ENCODE measurements at regions of chr10 and their contacts with region 1.

Region 1: GRCh38 chr10:114876602-114877300 is 55.2 kb downstream of the FHIP2A start:
- DNase-seq: peak; percentile 77
- H3K4me3 Mint-ChIP-seq: peak overlapping the region; percentile 17
- H3K27ac Mint-ChIP-seq: no peak overlapping the region
- H3K4me1 Mint-ChIP-seq: peaks cover 23% of the 10 kb centered on the region
- H3K27me3 Mint-ChIP-seq: no peaks in the 10 kb centered on the region
- CTCF ChIP-seq: peak; percentile 47

Region 2: DNA sequence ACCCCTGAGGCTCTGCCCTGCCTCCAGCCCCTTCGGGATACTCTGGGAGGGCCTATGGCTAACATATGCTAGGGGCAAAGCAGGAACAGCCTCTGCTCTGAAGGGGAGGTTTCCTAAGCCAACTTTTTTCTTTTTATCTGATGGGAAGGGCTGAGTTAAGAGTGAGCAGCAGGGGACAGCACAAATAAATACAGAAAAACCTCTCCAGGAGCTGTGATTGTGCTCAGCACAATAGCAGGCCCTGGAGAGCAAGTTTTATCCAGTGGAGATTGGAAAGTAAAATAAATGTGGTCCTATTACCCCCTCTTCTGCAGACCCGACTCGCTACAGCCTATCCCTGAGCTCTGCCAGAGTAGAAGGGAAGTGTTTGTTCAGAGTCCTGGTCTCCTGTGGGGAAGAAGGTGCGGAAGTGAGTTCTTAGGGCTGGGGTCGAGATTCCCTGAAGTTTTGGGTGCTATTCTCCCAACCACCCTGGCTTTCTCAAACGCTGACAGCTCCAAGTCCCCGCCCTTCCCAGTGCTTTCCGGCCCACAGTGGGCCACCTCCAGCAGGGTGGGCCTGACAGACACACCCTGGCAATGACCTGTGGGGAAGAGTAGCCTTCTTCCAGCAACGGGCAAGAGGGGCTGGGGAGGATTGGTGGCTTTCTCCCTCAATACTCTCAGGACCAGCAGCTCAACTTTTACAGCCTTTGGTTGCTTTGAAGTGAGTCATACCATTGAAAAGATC is 449.5 kb before region 1 on chr10:
- CTCF ChIA-PET with region 1: no interaction called
- intact Hi-C with region 1: no loop called
- DNase-seq: no peak
- H3K4me3 Mint-ChIP-seq: no peak overlapping the region
- H3K27ac Mint-ChIP-seq: no peak overlapping the region
- H3K4me1 Mint-ChIP-seq: no peaks in the 10 kb centered on the region
- H3K27me3 Mint-ChIP-seq: no peaks in the 10 kb centered on the region
- CTCF ChIP-seq: no peak

Region 3: GRCh38 chr10:114917927-114918672 is 41.3 kb after region 1 on chr10:
- CTCF ChIA-PET with region 1: no interaction called
- intact Hi-C with region 1: loop called (anchors 2 kb)
- DNase-seq: peak; percentile 57
- H3K4me3 Mint-ChIP-seq: peak overlapping the region; percentile 40
- H3K27ac Mint-ChIP-seq: peak overlapping the region; percentile 91
- H3K4me1 Mint-ChIP-seq: peaks cover 12% of the 10 kb centered on the region
- H3K27me3 Mint-ChIP-seq: no peaks in the 10 kb centered on the region
- CTCF ChIP-seq: no peak

Region 4: DNA sequence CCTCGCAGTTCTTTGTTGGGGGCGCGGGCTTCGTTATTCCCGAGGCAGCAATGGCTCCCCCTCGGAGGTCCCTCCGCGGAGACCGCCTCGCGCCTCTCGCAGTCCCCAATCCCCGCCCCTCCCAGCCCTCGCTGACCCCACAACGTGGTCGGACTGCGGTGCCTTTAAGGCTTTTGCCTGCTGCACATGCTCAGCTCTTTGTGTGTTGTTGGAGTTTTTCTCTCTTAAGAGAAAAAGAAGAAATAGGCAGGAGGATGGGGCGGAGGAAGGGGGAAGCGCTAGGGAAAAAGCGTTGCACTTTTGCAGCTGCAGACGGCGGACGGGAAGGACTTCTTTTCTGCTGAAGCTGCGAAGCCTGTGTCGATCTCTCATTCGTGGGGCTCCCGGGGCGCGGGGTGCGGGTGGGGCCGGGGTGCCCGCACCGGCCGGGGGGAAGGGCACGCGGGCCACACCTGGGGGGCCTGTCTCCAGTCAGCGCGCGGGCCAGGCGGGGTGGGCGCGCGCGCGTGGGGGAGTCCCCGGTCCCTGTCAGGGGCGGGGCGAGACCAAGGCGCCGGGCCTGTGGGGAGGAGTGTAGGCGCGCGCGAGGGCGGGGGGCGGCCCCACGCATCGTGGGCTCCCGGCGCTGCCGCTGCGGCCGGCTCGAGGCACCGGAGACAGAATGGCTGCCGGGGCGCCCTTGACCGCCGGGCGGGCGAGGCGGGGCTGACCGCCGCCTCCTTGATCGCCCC is 216.0 kb after region 1 on chr10:
- CTCF ChIA-PET with region 1: interaction called, 4 read pairs
- intact Hi-C with region 1: loop called (anchors 10 kb)
- DNase-seq: peak; percentile 29
- H3K4me3 Mint-ChIP-seq: peak overlapping the region; percentile 71
- H3K27ac Mint-ChIP-seq: no peak overlapping the region
- H3K4me1 Mint-ChIP-seq: no peaks in the 10 kb centered on the region
- H3K27me3 Mint-ChIP-seq: peaks cover 14% of the 10 kb centered on the region
- CTCF ChIP-seq: no peak

Region 5: DNA sequence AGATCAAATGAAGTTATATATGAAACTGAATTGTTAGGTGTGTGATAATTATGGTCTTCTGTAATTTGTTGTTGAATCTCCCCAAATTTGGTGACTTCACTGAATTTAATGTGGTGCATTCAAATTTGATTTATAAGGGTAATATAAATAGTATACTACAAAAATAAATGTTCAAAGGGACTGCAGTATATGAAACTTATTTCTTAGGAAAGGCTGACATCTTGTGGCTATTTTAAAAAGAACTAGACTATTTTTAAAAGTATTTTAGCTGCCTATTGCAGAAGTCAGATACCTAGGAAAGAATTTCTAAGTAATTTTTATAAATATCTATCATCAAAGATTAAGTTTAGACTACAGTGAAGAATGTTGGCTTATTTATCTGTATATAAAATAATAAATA is 253.0 kb after region 1 on chr10:
- CTCF ChIA-PET with region 1: interaction called, 7 read pairs
- intact Hi-C with region 1: loop called (anchors 1 kb)
- DNase-seq: no peak
- H3K4me3 Mint-ChIP-seq: no peak overlapping the region
- H3K27ac Mint-ChIP-seq: no peak overlapping the region
- H3K4me1 Mint-ChIP-seq: no peaks in the 10 kb centered on the region
- H3K27me3 Mint-ChIP-seq: no peaks in the 10 kb centered on the region
- CTCF ChIP-seq: no peak